Gastrocnemius medialis (tissue), 4 donors: ENCODE measurements at regions of chr17 and their contacts with region 1.

Region 1: DNA sequence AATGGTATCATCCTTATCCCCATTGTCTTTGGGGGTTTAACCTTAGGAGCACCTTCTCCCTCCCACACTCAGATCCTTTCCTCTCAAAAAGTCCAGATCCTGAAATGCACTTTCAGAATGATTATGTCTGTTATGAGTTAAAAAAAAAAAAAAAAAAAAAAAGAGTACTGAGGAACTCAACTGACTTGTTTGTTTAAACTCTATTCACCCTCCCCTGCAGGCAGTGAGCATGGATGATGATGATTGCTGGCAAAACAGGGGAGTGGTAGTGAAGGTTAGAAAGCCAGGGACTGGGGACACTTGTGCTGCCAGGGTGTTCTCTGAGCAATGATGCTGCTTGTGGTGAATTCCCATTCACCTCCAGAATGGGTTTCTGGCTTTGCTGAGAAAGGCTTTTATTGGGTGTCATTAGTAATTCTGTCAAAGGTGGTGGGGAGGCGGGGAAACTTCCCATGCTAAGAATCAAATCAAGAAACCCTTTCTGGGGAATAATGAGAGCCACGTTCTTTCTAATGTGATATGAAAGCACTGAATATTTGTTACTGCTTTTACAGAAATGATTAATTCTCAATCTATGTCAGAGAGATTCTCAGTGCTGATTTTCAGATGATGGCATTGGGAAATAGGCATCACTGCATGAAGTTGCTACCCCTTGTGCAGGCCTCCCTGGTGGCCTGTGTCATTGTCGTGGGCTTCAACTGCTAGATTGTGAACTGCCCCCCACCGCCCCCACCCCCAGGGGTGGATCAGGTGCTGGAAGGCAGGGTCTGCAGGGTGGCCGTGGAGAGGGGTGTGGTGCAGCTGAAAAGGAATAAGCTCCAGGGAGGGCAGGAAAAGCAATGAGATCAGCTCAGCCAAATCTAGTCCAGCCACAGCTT is 14.1 kb downstream of the CCL4 start:
- DNase-seq: no peak
- ATAC-seq: no peak
- H3K4me3 ChIP-seq: no peak overlapping the region
- H3K27ac ChIP-seq: no peak overlapping the region
- H3K4me1 ChIP-seq: no peaks in the 10 kb centered on the region
- H3K27me3 ChIP-seq: no peaks in the 10 kb centered on the region
- CTCF ChIP-seq: no peak
- POLR2A ChIP-seq: no peak

Region 2: DNA sequence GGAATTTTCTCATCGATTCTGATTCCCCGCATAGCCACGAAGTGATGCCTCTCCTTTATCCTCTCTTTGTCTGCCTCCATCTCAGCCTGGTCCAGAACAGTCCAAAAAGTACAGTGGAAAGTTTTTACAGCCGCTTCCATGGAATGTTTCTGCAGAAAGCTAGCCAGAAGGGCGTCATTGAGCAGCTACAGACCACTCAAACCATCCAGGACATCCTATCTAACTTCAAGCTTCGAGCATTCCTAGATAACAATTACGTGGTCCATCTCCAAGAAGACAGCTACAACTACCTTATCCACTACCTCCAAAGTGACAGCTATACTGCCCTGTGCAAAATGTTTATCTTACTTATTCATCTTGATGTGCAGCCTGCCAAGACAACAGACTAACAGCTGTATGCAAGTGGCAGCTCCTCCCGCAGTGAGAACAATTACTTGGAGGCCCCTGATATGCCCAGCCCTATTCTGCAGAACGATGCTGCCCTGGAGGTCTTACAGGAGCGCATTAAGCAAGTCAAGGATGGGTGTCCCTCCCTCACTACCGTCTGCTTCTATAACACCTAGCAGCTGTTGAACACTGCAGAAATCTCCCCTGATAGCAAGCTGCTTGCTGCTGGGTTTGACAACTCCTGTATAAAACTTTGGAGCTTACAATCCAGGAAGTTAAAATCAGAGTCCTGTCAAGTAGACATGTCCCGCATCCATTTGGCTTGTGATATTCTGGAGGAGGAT is 619.1 kb before region 1 on chr17:
- in situ Hi-C with region 1: no loop called
- intact Hi-C with region 1: no loop called
- DNase-seq: no peak
- ATAC-seq: no peak
- H3K4me3 ChIP-seq: peak overlapping the region in 1 of 4 donors; percentile 11
- H3K27ac ChIP-seq: no peak overlapping the region
- H3K4me1 ChIP-seq: peaks cover 0 to 3% of the 10 kb centered on the region in 2 donors
- H3K27me3 ChIP-seq: peaks cover 59 to 84% (median 63%) of the 10 kb centered on the region in 3 donors
- CTCF ChIP-seq: no peak
- POLR2A ChIP-seq: no peak

Region 3: DNA sequence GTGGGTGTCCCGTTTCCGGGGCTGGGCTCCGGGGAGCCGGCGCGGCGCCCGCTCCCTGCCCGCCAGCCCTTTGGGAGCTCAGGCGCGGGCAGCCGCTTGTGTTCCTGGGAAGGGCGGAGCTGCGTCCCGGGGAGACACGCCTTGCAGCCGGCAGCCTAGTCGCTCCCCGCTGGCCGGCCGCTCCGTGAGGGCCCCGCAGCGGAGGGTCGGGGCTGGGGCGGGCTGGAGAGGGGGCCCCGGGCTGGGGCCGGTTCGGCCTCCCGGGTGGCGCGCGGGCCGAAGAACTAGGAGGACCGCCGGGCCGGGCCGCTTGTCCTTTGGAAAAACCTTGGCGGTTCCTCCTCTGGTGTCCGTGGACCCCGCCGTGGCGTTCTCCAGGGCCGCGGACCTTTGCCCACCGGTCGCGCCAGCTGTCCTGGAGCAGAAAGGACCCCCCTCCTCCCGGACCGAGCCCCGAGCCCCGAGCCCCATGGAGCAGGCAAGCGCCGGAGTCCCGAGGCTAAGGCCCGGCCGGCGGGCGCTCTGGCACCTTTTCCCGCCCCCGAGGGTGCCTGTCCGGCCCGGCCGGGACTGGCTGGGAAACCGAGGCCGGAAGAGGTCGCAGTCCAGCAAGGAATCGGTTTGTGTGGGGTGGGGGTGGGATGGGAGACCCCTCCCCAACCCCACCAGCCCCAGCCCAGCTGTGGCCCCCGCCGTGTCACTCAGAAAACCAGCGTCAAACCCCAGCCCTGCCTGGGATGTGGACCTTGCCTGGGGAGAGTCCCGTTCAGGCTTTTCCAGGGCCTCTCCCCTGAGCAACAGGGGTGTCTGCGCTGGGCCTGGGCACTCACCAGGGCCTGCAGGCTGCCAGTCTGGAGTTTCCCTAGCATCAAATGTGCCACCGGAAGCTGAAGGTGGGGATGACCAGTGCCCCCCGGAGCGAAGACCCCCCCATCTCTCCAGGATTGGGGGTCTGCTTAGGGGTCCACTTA is 65.5 kb after region 1 on chr17:
- in situ Hi-C with region 1: loop called in 1 of 4 experiments (anchors 10 kb)
- intact Hi-C with region 1: no loop called
- DNase-seq: no peak
- ATAC-seq: peak in 1 of 2 donors; percentile 24
- H3K4me3 ChIP-seq: peak overlapping the region; percentile 19 to 71 (median 48)
- H3K27ac ChIP-seq: peak overlapping the region in 1 of 4 donors; percentile 2
- H3K4me1 ChIP-seq: peaks cover 0 to 7% of the 10 kb centered on the region in 2 donors
- H3K27me3 ChIP-seq: peaks cover 25 to 54% (median 40%) of the 10 kb centered on the region in 3 donors
- CTCF ChIP-seq: no peak
- POLR2A ChIP-seq: peak in 1 of 2 donors; percentile 16